ENCODE measurements at regions of chr1 and their contacts with region 1.

Region 1: GRCh38 chr1:70134148-70134547 is 71.2 kb downstream of the LRRC40 start:
- DNase-seq: no peak
- ATAC-seq: peak; percentile 48

Region 2: DNA sequence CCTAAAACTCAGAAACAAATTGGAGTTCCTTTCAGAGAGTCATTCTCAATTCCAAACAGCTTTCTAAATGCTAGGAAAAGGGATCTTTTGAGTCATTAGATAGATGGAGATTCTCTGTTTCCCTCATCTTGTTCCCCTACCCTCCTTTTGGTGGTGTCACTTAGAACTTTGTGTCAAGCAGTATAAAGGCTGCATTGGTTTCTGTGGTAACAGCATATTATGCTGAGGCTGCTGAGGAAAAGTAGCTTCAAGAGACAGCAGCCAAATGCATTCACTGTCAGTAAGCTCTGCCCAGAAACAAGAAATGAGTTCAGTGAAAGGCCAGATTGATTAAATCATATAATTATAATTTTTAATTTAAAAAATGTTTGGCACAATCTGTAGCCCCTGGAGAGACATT is 72.9 kb before region 1 on chr1:
- intact Hi-C with region 1: no loop called
- DNase-seq: no peak
- ATAC-seq: no peak

Region 3: GRCh38 chr1:70509996-70510876 is 376.1 kb after region 1 on chr1:
- intact Hi-C with region 1: loop called (anchors 5 kb)
- DNase-seq: peak; percentile 41
- ATAC-seq: peak; percentile 71

Measured in Right ventricle myocardium superior (tissue), 1 donor.